Caco-2 (cell line): ENCODE measurements at regions of chr21 and their contacts with region 1.

Region 1: DNA sequence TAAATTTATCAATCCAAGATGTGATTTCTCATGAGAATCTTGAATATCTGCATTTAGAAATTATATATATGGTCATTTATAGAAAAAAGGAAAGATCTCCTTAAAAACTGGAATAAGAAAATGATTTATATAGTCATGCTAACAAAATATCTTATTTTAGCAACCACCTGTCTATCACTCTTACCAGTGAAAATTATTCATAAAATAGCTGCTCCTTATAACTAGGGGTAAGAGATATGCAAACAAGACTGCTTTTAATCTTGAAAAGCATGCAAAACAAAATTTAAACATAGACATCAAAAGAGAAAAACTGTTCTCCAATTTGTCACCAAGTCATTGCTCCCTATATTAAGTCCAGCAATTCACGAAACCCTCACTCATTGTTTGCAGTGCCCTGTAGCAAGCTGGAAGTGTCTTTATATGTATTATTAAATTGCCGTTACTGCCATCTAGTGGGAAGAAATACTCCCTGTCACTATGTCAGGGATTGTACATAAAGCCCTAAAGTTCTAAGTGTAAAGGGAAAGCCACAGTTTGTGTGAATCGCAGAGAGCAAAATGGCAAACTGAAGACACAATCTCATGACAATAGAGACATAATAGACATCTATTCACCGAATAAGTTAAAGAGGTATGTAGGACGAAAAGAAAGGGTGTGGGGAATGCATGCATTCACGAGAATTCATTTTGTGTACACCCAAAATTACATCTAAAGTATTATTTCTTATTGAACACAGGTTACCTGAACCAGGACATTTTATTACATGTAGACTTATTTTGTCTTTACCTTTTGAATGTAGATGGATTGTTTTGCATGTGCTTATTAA is 600.5 kb downstream of the USP25 start:
- DNase-seq: peak in 1 of 2 experiments; percentile 60
- H3K4me3 ChIP-seq: no peak overlapping the region
- H3K4me3 Mint-ChIP-seq: no peak overlapping the region
- H3K27ac Mint-ChIP-seq: no peak overlapping the region
- H3K4me1 ChIP-seq: no peaks in the 10 kb centered on the region
- H3K4me1 Mint-ChIP-seq: no peaks in the 10 kb centered on the region
- H3K27me3 ChIP-seq: no peaks in the 10 kb centered on the region
- H3K27me3 Mint-ChIP-seq: no peaks in the 10 kb centered on the region
- CTCF ChIP-seq: peak; percentile 28 to 53

Region 2: GRCh38 chr21:15894596-15894995 is 435.7 kb before region 1 on chr21:
- CTCF ChIA-PET with region 1: no interaction called
- POLR2A ChIA-PET with region 1: no interaction called
- intact Hi-C with region 1: loop called (anchors 5 kb)
- DNase-seq: no peak
- H3K4me3 ChIP-seq: no peak overlapping the region
- H3K4me3 Mint-ChIP-seq: no peak overlapping the region
- H3K27ac Mint-ChIP-seq: no peak overlapping the region
- H3K4me1 ChIP-seq: no peaks in the 10 kb centered on the region
- H3K4me1 Mint-ChIP-seq: no peaks in the 10 kb centered on the region
- H3K27me3 ChIP-seq: no peaks in the 10 kb centered on the region
- H3K27me3 Mint-ChIP-seq: no peaks in the 10 kb centered on the region
- CTCF ChIP-seq: no peak

Region 3: DNA sequence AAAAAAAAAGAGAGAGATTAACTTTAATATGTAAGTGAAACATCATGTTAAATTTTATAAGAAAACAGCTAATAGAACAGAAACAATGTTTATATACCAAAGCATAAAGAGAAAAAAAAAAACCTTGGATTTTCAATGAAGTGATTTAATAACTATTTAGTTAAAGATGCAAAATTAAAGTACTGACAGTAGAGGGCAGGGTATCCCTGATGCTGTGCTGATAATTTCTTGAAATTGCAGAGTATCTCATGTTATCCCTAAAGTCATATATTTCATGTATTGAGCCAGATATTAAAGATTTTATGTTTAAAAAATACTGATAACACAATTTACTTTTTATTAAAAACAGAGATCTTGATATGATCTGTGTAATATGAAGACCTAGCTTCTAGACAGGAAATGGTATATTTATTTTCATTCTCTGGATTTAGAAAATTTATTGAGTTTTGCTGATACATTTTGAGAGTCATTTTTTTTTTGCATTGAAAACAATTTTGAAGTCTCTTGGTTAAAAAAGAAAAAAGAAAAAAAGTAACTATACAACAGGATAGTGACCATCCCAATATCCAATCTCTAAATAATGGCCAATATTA is 327.3 kb before region 1 on chr21:
- CTCF ChIA-PET with region 1: no interaction called
- POLR2A ChIA-PET with region 1: no interaction called
- intact Hi-C with region 1: loop called (anchors 1 kb)
- DNase-seq: no peak
- H3K4me3 ChIP-seq: no peak overlapping the region
- H3K4me3 Mint-ChIP-seq: no peak overlapping the region
- H3K27ac Mint-ChIP-seq: no peak overlapping the region
- H3K4me1 ChIP-seq: no peaks in the 10 kb centered on the region; the same call in 1 of the 2 replicates
- H3K4me1 Mint-ChIP-seq: no peaks in the 10 kb centered on the region
- H3K27me3 ChIP-seq: no peaks in the 10 kb centered on the region
- H3K27me3 Mint-ChIP-seq: no peaks in the 10 kb centered on the region
- CTCF ChIP-seq: peak; percentile 15 to 20

Region 4: DNA sequence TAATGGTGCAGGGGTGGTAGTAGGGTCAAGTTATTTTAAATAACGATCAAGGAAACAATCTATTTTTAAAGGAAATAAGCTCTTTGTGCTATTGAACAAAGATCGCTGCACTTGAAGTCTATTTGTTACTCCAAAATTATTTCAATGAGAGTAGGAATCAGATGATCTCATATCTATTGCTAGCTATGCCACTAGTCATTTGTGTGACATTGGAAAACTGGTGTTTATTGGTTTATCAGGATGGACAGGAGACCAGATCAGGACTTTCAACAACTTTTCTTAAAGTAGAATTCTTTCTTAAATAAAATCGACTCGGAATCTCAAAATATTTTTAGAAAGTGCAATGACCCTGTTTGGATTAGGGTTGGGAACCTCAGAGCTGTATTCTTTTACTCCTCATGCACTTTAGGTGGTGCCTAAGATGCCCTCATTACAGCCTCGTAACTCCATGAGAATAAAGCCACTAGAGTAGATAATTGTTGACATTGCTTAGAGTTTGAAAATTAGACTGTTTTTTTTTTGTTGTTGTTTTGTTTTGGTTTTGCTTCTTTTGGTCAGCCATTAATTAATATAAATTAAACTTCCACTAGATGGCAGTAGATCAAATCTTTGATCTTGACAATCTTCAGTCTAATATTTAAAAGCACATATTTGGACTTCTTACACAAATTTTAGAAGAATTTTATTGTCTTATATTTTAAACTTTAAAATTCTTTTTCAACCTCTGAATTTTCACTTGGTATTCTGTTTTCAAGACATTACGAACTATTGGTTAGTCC is 248.1 kb before region 1 on chr21:
- CTCF ChIA-PET with region 1: interaction called, 3 read pairs
- POLR2A ChIA-PET with region 1: no interaction called
- intact Hi-C with region 1: loop called (anchors 1 kb)
- DNase-seq: no peak
- H3K4me3 ChIP-seq: no peak overlapping the region
- H3K4me3 Mint-ChIP-seq: no peak overlapping the region
- H3K27ac Mint-ChIP-seq: no peak overlapping the region
- H3K4me1 ChIP-seq: no peaks in the 10 kb centered on the region
- H3K4me1 Mint-ChIP-seq: no peaks in the 10 kb centered on the region
- H3K27me3 ChIP-seq: no peaks in the 10 kb centered on the region
- H3K27me3 Mint-ChIP-seq: no peaks in the 10 kb centered on the region
- CTCF ChIP-seq: peak in 1 of 2 experiments; percentile 47